Gastrocnemius medialis (tissue), 4 donors: ENCODE measurements at regions of chr15 and their contacts with region 1.

Region 1: GRCh38 chr15:69160141-69160993 is at the start of gene GLCE:
- DNase-seq: peak; percentile 87 to 92
- ATAC-seq: peak; percentile 93 to 96
- H3K4me3 ChIP-seq: peak within 1 kb of the TSS; percentile 79 to 98 (median 94)
- H3K27ac ChIP-seq: peak within 1 kb of the TSS; percentile 78 to 89 (median 86)
- H3K4me1 ChIP-seq: peaks cover 6 to 8% of the 10 kb centered on the region in 2 donors
- H3K27me3 ChIP-seq: no peaks in the 10 kb centered on the region
- CTCF ChIP-seq: no peak
- POLR2A ChIP-seq: peak; percentile 72 to 77
- total RNA-seq, gene GLCE: 4.8 to 6.6 (median 5.6) TPM

Region 2: GRCh38 chr15:69058830-69059556 is 101.4 kb before region 1 on chr15:
- in situ Hi-C with region 1: no loop called
- intact Hi-C with region 1: loop called (anchors 1 kb)
- DNase-seq: peak; percentile 48 to 75
- ATAC-seq: peak; percentile 88
- H3K4me3 ChIP-seq: peak overlapping the region in 2 of 4 donors; percentile 9 to 17
- H3K27ac ChIP-seq: peak overlapping the region in 1 of 4 donors; percentile 46
- H3K4me1 ChIP-seq: peaks cover 9 to 14% of the 10 kb centered on the region in 2 donors
- H3K27me3 ChIP-seq: no peaks in the 10 kb centered on the region
- CTCF ChIP-seq: peak; percentile 85 to 89 (median 87)
- POLR2A ChIP-seq: no peak

Region 3: DNA sequence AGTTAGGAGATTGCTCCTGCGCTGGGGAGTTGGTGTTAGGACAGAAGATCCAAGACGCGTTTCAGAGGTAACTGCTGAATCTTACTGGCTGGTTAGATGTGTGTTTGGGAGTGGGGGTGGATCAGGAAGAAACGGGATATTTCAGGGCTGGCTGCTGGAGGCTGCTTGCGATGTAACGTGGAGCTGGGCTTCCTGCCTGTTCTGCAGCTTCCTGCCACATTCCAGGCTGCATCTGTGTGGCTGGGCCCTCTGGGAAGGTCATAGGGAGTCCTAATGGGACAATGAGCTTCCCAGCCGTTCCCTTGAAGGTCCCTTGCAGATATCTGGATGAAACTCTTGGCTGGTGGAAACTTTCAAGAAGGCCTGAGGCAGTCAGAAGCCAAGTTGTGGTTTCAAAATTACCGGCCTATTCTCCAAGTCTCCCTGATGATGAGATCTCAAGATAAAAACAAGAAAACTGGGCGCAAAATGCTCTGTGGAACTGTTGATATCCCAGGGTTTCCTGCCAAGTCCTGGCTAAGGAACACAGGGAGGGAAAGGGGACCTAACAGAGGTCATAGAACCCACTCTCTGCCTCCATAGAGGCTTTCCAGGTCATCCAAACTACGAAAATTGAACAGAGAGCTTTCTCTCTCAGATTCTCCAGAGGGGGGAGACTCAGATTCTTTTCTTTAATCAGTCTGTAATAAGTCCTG is 78.9 kb before region 1 on chr15:
- in situ Hi-C with region 1: no loop called
- intact Hi-C with region 1: loop called (anchors 5 kb)
- DNase-seq: peak; percentile 37 to 66
- ATAC-seq: peak; percentile 51 to 56
- H3K4me3 ChIP-seq: peak overlapping the region in 1 of 4 donors; percentile 8
- H3K27ac ChIP-seq: peak overlapping the region; percentile 63 to 74 (median 69)
- H3K4me1 ChIP-seq: peaks cover 28 to 41% of the 10 kb centered on the region in 2 donors
- H3K27me3 ChIP-seq: no peaks in the 10 kb centered on the region
- CTCF ChIP-seq: no peak
- POLR2A ChIP-seq: no peak

Region 4: DNA sequence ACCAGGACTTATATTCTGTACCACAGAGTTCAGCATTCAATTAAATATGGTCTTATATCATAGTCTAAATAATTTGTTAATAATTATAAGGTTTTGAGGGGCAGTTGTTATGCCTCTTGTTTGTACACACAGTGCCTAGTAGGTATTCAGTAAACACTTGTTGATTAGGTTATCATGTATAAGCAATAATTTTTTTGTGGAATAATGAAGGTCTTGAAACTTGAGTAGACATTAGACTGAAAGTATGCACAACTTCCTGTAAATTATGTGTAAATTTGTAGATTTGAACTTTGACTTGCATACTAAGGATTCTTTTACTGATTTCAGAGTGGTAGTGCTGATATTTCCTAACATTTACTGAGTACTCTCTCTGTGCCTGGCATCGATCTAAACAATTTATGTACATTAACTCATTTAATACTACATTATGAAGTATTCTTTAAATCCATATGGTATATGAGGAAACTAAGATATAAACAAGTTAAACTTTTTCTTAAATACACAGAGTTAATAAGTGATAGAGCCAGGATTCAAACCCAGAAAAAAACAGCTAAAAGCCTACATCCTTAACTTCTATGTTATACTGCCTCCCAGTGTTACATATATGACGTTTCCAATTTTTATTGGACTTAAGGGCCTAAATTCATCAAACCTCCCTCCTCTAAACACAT is 65.1 kb after region 1 on chr15:
- in situ Hi-C with region 1: no loop called
- intact Hi-C with region 1: loop called (anchors 5 kb)
- DNase-seq: no peak
- ATAC-seq: no peak
- H3K4me3 ChIP-seq: no peak overlapping the region
- H3K27ac ChIP-seq: no peak overlapping the region
- H3K4me1 ChIP-seq: peaks cover 0 to 11% of the 10 kb centered on the region in 2 donors
- H3K27me3 ChIP-seq: no peaks in the 10 kb centered on the region
- CTCF ChIP-seq: peak in 1 of 5 experiments; percentile 26
- POLR2A ChIP-seq: no peak

Region 5: DNA sequence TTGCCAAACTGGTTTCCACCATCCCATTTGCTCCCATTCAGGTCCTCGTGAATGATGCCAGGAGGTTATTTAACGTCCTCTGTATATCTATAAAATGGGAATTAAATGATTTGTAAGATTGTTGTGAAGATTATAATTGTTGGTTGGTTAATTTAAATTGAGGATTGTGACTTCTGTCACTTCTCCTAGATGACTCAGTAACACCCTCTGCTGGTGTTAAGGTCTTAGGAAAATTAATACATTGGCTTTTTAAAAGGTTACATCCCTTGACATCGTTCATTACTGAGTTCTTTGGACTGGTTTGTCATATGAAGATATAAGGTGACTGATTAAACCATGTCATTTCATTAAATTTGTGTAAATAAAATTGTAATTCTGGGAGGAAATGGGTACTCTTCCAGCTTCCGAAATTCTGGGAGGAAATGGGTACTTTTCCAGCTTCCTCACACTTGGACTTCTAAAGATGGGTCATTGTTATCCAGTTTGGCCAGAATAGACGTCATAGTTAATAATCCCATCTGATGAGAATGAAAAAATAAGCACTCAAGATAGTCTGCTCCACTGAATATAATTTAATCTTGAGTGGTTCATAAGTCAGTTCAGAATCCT is 105.1 kb after region 1 on chr15:
- in situ Hi-C with region 1: no loop called
- intact Hi-C with region 1: loop called (anchors 2 kb)
- DNase-seq: no peak
- ATAC-seq: no peak
- H3K4me3 ChIP-seq: no peak overlapping the region
- H3K27ac ChIP-seq: no peak overlapping the region
- H3K4me1 ChIP-seq: no peaks in the 10 kb centered on the region
- H3K27me3 ChIP-seq: no peaks in the 10 kb centered on the region
- CTCF ChIP-seq: peak; percentile 24 to 57 (median 36)
- POLR2A ChIP-seq: no peak

Region 6: GRCh38 chr15:69320977-69321554 is 160.7 kb after region 1 on chr15:
- in situ Hi-C with region 1: no loop called
- intact Hi-C with region 1: no loop called
- DNase-seq: no peak
- ATAC-seq: no peak
- H3K4me3 ChIP-seq: no peak overlapping the region
- H3K27ac ChIP-seq: no peak overlapping the region
- H3K4me1 ChIP-seq: no peaks in the 10 kb centered on the region
- H3K27me3 ChIP-seq: peaks cover 0 to 6% (median 0%) of the 10 kb centered on the region in 3 donors
- CTCF ChIP-seq: no peak
- POLR2A ChIP-seq: no peak

Region 7: DNA sequence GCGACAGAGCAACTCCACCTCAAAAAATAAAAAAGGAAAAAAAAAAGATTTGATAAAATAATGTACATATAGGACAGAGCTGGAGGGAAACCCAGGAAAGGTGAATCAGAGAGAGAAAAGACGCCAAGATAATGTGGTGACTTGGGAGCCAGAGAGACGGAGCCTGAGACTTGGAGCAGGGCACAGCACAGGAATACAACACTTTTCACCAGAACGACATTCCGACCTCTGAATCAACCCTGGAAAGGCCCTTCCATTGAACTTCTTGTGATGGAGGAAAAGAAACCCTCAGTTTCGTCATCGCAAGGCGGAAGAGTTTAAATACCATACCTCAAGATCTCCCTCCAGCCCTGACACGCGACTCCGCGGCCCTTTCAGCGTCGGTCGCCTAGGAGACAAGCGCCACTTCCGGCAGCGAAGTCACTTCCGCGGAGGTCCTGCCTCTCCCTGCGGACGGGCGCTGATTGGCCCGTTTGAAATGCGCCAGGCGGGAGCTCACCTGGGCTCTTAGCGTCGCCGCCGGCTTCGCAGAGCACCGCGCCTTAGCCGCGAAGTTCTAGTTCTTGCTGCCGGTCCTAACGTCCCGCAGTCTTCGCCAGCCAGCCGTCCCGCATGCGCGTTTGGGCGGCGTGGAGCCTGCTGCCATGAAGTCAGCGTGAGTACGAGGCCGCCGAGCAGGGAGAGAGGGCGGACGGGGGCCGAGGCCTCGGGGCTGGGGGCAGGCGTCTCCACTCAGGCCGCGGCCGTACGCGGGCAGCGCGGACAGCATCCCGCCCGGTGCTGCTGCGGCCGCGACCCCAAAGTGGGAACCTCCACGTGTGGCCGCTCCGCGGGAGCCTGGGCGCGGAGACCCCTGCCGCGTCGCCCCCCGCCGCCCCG is 253.7 kb after region 1 on chr15 and contains the start of gene KIF23:
- in situ Hi-C with region 1: no loop called
- intact Hi-C with region 1: loop called (anchors 1 kb)
- DNase-seq: peak; percentile 74 to 83
- ATAC-seq: peak; percentile 95 to 97
- H3K4me3 ChIP-seq: peak within 1 kb of the TSS; percentile 69 to 91 (median 80)
- H3K27ac ChIP-seq: no peak within 1 kb of the TSS
- H3K4me1 ChIP-seq: peaks cover 9 to 10% of the 10 kb centered on the region in 2 donors
- H3K27me3 ChIP-seq: peaks cover 0 to 8% (median 2%) of the 10 kb centered on the region in 3 donors
- CTCF ChIP-seq: no peak
- POLR2A ChIP-seq: no peak
- total RNA-seq, gene KIF23: 0.47 to 0.81 TPM in 2 of 4 donors, not detected in the others

Region 8: DNA sequence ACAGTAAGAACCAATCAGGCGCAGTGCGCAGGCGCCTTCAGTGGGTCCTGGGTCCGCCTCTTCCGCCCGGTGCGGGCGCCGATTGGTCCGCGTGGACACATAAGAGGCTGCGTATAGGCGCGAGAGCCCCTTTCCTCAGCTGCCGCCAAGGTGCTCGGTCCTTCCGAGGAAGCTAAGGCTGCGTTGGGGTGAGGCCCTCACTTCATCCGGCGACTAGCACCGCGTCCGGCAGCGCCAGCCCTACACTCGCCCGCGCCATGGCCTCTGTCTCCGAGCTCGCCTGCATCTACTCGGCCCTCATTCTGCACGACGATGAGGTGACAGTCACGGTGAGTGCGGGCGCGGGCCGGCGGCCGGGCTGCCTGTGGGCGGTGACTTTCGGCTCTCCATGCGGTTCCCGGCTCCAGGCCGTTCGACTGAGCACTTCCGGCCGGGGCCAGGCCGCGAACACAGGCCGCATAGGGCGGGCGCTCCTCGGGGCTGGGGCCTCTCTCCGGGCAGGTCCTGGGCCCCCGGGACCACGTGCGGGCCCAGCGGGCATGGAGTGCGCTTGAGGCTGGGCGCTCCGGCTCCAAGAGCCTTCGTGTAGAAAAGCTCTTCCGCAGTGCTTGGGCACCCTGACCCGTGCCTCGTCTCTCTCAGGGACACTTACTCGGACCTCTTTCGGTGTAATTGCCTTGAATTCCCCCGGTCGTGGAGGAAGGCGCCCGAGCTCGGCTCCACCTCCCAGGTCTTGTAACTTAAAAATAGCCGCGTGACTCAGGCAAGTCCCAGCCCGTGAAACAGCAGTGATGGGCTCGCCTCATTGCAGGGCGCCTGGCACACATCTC is 292.5 kb after region 1 on chr15 and contains the start of gene RPLP1:
- in situ Hi-C with region 1: no loop called
- intact Hi-C with region 1: loop called (anchors 1 kb)
- DNase-seq: peak; percentile 95 to 97
- ATAC-seq: peak; percentile 80 to 84
- H3K4me3 ChIP-seq: peak within 1 kb of the TSS; percentile 73 to 97 (median 88)
- H3K27ac ChIP-seq: peak within 1 kb of the TSS; percentile 96 to 99 (median 97)
- H3K4me1 ChIP-seq: peaks cover 41 to 43% of the 10 kb centered on the region in 2 donors
- H3K27me3 ChIP-seq: no peaks in the 10 kb centered on the region
- CTCF ChIP-seq: peak in 1 of 5 experiments; percentile 12
- POLR2A ChIP-seq: peak; percentile 97 to 99
- total RNA-seq, gene RPLP1: 849 to 1,174 (median 925) TPM